Heart left ventricle (tissue), 16 donors: ENCODE measurements at regions of chr4 and their contacts with region 1.

Region 1: GRCh38 chr4:41644288-41644914 is 104.1 kb downstream of the PHOX2B start:
- DNase-seq: peak; percentile 64 to 87 (median 77)
- ATAC-seq: peak; percentile 63 to 94 (median 92)
- H3K4me3 ChIP-seq: peak overlapping the region in 6 of 12 donors; percentile 7 to 31 (median 14)
- H3K27ac ChIP-seq: peak overlapping the region in 4 of 12 donors; percentile 27 to 55 (median 46)
- H3K4me1 ChIP-seq: peaks cover 0 to 36% (median 24%) of the 10 kb centered on the region in 12 donors
- H3K27me3 ChIP-seq: peaks cover 0 to 19% (median 0%) of the 10 kb centered on the region in 9 donors
- CTCF ChIP-seq: peak; percentile 76 to 96 (median 90)
- POLR2A ChIP-seq: no peak

Region 2: DNA sequence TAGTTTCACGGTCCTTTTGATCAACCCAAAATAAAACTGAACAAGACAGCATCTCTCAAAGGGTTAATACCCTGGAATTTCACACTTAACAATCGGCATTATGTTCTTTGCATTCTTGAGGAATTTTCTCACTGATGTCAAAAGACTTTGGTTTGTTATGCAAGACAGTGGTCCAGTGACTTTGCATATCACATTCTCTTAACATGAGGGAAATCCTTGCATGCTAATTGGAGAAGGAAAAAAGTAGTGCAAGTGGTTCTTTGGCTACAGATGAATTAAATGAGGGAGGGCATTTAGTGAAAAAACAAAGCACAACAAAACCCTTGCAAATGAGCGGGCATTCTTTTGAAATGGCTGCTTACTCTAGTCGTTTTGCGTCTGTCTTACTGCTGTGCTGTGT is 211.5 kb before region 1 on chr4:
- intact Hi-C with region 1: loop called in 3 of 10 experiments (anchors 10 kb)
- DNase-seq: no peak
- ATAC-seq: no peak
- H3K4me3 ChIP-seq: no peak overlapping the region
- H3K27ac ChIP-seq: peak overlapping the region in 8 of 12 donors; percentile 2 to 93 (median 68)
- H3K4me1 ChIP-seq: peaks cover 3 to 88% (median 61%) of the 10 kb centered on the region in 12 donors
- H3K27me3 ChIP-seq: no peaks in the 10 kb centered on the region
- CTCF ChIP-seq: no peak
- POLR2A ChIP-seq: no peak